Caco-2 (cell line): ENCODE measurements at regions of chr11 and their contacts with region 1.

Region 1: GRCh38 chr11:76074148-76075095 is 131.9 kb downstream of the WNT11 start:
- DNase-seq: no peak
- H3K4me3 ChIP-seq: no peak overlapping the region
- H3K4me3 Mint-ChIP-seq: no peak overlapping the region
- H3K27ac Mint-ChIP-seq: no peak overlapping the region
- H3K4me1 ChIP-seq: peaks cover 14% of the 10 kb centered on the region
- H3K4me1 Mint-ChIP-seq: peaks cover 11% of the 10 kb centered on the region
- H3K27me3 ChIP-seq: no peaks in the 10 kb centered on the region
- H3K27me3 Mint-ChIP-seq: no peaks in the 10 kb centered on the region
- CTCF ChIP-seq: no peak

Region 2: GRCh38 chr11:76025068-76025467 is 49.4 kb before region 1 on chr11:
- CTCF ChIA-PET with region 1: no interaction called
- POLR2A ChIA-PET with region 1: no interaction called
- intact Hi-C with region 1: no loop called
- DNase-seq: no peak
- H3K4me3 ChIP-seq: no peak overlapping the region
- H3K4me3 Mint-ChIP-seq: no peak overlapping the region
- H3K27ac Mint-ChIP-seq: no peak overlapping the region
- H3K4me1 ChIP-seq: peaks cover 7% of the 10 kb centered on the region
- H3K4me1 Mint-ChIP-seq: peaks cover 22% of the 10 kb centered on the region
- H3K27me3 ChIP-seq: no peaks in the 10 kb centered on the region
- H3K27me3 Mint-ChIP-seq: no peaks in the 10 kb centered on the region
- CTCF ChIP-seq: no peak

Region 3: DNA sequence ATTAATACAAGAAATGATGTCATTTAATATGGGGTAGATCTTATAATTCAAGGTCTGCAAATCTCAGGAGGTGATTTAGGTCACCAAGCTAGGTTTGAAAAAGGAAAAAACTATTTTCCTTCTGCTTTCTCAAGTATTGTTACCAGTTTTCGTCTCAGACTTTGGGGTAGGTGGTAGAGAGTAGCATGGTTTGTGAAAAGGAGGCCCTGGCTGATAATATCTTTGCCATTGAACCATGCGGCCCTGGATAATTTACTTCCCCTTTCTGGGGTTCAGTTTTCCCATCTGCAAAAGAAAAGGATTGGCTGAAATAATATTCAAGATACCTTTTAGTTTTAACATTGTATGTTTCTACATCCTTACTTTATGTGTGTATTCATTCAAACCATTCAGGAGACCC is 39.8 kb after region 1 on chr11:
- CTCF ChIA-PET with region 1: no interaction called
- POLR2A ChIA-PET with region 1: no interaction called
- intact Hi-C with region 1: loop called (anchors 5 kb)
- DNase-seq: no peak
- H3K4me3 ChIP-seq: no peak overlapping the region
- H3K4me3 Mint-ChIP-seq: no peak overlapping the region
- H3K27ac Mint-ChIP-seq: no peak overlapping the region
- H3K4me1 ChIP-seq: peaks cover 6% of the 10 kb centered on the region
- H3K4me1 Mint-ChIP-seq: no peaks in the 10 kb centered on the region
- H3K27me3 ChIP-seq: no peaks in the 10 kb centered on the region
- H3K27me3 Mint-ChIP-seq: no peaks in the 10 kb centered on the region
- CTCF ChIP-seq: no peak